KBM-7 (cell line): ENCODE measurements at regions of chr11 and their contacts with region 1.

Region 1: GRCh38 chr11:62911137-62912130 is 9.7 kb downstream of the CHRM1 start:
- DNase-seq: peak; percentile 32

Region 2: DNA sequence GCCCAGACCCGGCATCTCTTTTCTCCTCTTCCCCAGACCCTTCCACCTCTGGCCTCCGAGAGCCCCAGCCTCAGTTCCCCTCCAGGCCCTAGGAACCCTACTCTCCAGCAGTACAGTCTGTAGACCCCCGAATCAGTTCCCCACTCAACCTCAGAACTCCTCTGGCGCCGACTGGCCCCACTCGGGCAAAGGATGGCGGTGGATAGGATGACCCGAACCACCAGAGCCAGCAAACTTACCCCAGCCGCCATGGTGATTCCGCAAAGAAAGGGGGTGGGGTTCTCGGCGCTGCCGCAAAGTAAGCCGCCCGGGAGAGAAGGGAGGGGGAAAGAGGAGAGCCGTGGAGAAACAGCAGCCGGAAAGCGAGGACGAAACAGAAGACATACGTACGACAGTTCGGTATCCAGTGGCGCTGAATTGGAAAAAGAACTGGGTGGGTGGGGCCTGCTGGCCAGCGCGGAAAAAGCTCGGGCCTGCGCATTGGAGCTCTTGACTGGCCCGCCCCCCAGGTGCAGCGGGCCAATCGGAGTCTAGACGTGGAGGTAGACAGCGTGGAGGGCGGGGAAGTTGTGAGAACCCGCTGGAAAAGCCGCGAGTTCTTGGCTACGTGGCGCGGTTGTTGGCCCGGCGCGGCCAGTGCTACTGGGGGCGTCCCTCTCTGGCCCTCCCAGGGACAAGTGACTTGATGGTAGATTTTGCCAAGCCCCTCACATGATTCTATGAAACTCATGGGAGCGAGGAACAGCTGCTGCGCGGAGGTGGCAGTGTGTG is 337.7 kb before region 1 on chr11 and contains the start of gene EEF1G:
- in situ Hi-C with region 1: no loop called
- DNase-seq: peak; percentile 100

Region 3: DNA sequence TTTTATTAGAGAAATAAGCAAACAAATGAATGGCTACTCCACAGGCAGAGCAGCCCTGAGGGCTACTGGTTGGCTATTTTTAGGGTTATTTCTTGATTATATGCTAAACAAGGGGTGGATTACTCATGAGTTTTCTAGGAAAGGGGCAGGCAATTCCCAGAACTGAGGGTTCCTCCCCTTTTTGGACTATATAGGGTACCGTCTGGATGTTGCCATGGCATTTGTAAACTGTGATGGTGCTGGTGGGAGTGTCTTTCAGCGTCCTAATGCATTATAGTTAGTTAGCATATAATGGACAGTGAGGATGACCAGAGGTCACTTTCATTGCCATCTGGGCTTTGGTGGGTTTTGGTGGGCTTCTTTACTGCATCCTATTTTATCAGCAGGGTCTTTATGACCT is 54.1 kb after region 1 on chr11:
- in situ Hi-C with region 1: no loop called
- DNase-seq: no peak

Region 4: DNA sequence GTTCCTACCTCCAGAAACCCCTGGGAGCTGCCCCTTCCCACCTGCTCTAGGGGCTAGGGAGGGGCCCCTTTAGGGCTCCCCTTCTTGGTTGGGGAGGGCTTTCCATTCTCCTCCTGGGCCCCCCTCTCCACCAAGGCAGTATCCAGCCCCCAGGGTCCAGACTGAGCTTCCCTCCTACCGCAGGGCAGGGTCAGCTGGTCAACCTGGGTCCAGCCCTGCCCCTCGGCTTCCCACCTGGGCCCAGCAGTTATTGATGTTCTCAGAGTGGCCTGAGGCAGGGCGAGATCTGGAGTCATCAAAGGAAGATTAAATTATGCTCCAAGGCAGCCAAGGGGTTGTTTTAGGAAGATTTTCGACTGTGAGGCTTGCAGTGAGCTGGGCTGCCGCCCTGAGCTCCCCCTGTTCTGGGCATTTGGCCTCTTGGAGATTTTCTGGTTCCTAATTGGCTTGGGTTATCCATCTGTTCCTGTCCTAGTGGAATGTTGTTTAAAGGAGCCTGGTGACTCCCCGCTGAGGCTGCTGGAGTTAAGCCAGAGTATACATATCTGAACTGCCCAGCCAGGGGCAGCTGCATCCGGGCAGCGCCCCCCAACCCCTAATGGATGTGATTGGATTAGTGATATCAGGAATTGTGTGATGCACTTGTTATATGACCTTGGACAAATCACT is 106.0 kb after region 1 on chr11:
- in situ Hi-C with region 1: loop called (anchors 10 kb)
- DNase-seq: no peak